A673 (cell line): ENCODE measurements at regions of chr11 and their contacts with region 1.

Region 1: GRCh38 chr11:12110201-12110713 is at the start of gene MICAL2:
- DNase-seq: peak; percentile 87
- H3K4me3 ChIP-seq: peak within 1 kb of the TSS; percentile 31
- H3K27ac ChIP-seq: no peak within 1 kb of the TSS
- H3K4me1 ChIP-seq: no peaks in the 10 kb centered on the region
- H3K27me3 ChIP-seq: no peaks in the 10 kb centered on the region
- CTCF ChIP-seq: no peak
- total RNA-seq, gene MICAL2: 0.44 and 1.1 TPM in 2 replicates

Region 2: DNA sequence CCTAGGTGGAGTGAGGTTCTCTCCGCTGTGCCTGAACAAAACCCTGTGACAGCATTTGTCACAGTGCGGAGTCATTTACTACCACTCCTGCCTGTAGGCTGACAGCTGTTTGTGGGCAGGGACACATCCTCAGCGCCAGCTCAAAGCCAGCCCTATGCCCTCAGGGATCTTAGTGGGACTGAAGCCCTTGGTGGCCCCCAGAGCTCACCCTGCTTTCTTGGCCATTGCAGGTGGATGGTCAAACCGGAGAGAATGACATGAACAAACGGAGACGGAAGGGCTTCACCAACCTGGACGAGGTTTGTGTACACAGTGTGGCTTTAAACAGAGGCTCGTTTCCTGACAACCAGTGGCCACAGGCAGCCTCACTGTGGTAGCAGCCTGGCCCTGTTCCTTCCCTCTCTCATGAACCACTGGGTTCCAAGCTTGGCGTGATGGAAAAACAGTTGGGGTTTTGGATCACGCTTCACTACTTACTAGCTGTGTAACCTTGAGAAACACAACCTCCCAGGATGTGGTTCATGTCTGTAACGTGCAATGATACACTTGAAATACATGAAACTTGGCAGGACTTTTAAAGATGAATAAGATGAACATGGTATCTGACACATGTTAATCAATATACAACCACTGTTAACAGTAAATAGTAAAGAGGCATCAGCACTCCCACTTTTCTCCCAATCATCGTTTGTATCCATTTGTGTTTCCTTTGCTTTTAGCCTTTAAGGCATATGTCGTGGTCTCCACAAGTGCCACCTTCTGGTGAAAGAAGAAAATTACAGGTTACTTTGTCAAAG is 125.9 kb after region 1 on chr11:
- CTCF ChIA-PET with region 1: no interaction called
- POLR2A ChIA-PET with region 1: no interaction called
- intact Hi-C with region 1: loop called (anchors 10 kb)
- DNase-seq: peak; percentile 67
- H3K4me3 ChIP-seq: no peak overlapping the region
- H3K27ac ChIP-seq: no peak overlapping the region
- H3K4me1 ChIP-seq: no peaks in the 10 kb centered on the region
- H3K27me3 ChIP-seq: no peaks in the 10 kb centered on the region
- CTCF ChIP-seq: peak; percentile 61

Region 3: GRCh38 chr11:12449961-12450715 is 339.9 kb after region 1 on chr11:
- CTCF ChIA-PET with region 1: no interaction called
- POLR2A ChIA-PET with region 1: no interaction called
- intact Hi-C with region 1: no loop called
- DNase-seq: no peak
- H3K4me3 ChIP-seq: no peak overlapping the region
- H3K27ac ChIP-seq: no peak overlapping the region
- H3K4me1 ChIP-seq: no peaks in the 10 kb centered on the region
- H3K27me3 ChIP-seq: no peaks in the 10 kb centered on the region
- CTCF ChIP-seq: no peak